Dendritic cell treated with granulocyte-macrophage colony-stimulating factor and Interleukin-4, amounts not matched to agents 40 ng/mL and 50 ng/mL, for 4 days (primary cell): ENCODE measurements at regions of chr20 and their contacts with region 1.

Region 1: DNA sequence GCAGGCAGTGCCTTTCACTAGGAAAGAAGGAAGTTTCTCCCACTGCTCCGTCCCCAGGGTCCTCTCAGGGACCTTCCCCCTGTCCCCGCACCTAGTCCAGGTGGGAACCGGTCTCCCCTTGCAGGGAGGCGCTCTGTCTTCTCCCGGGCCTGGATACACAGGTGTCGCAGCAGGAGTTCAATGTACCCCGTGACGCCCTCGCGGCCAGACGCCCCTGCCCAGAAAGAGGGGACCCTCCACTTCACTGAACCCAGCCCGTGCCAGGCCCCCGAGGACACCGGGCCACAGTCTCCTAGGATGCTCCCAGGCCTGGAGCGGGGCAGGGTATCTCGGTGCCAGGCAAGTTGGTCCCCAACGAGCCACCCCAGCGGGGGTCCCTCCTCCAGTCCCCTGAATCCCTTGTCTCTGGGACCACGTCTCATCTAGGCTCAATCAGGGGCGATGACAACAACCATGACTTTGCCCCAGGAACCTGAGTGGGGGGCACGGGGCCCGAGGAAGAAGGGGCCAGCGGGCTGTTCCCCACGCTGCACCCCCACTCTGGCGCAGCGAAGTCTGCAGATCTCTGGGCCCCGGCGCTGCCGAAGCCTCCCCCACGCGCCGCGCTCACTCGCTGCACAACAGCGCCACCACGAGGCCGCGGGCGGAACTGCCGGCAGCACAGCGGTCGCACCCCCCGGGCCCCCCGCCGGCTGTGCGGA is 103.0 kb downstream of the EDN3 start:
- H3K4me3 Mint-ChIP-seq: no peak overlapping the region
- H3K27ac Mint-ChIP-seq: no peak overlapping the region
- H3K4me1 Mint-ChIP-seq: no peaks in the 10 kb centered on the region
- H3K27me3 Mint-ChIP-seq: peaks cover 2% of the 10 kb centered on the region

Region 2: DNA sequence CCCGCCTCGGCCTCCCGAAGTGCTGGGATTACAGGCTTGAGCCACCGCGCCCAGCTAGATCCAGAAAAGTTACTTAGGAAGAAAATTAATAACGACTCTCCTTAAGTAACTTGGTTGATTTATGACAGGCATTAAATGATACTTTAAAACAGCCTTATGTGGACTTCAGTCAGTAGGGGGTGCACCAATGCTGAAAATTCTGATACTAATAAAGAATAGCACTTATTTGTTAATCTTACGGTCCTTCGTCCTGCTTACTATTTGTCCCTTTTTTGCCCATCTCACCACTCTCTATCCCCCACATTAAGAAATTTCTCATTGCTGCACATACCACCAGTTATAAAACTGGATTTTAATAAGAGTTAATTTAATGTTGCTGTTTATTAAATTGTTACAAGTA is 348.1 kb before region 1 on chr20:
- intact Hi-C with region 1: loop called (anchors 10 kb)
- H3K4me3 Mint-ChIP-seq: no peak overlapping the region
- H3K27ac Mint-ChIP-seq: no peak overlapping the region
- H3K4me1 Mint-ChIP-seq: no peaks in the 10 kb centered on the region
- H3K27me3 Mint-ChIP-seq: peaks cover 32% of the 10 kb centered on the region

Region 3: GRCh38 chr20:59087829-59088433 is 315.5 kb before region 1 on chr20:
- intact Hi-C with region 1: loop called (anchors 2 kb)
- H3K4me3 Mint-ChIP-seq: no peak overlapping the region
- H3K27ac Mint-ChIP-seq: no peak overlapping the region
- H3K4me1 Mint-ChIP-seq: no peaks in the 10 kb centered on the region
- H3K27me3 Mint-ChIP-seq: peaks cover 15% of the 10 kb centered on the region